HepG2 (cell line): ENCODE measurements at regions of chr17 and their contacts with region 1.

Region 1: GRCh38 chr17:56581635-56582627 is 11.6 kb upstream of the NOG start:
- DNase-seq: no peak
- ATAC-seq: no peak
- H3K4me3 ChIP-seq: no peak overlapping the region
- H3K27ac ChIP-seq: no peak overlapping the region
- H3K4me1 ChIP-seq: no peaks in the 10 kb centered on the region
- H3K27me3 ChIP-seq: peaks cover 0 to 53% of the 10 kb centered on the region in 2 experiments; a peak in 4 of 5 replicates
- CTCF ChIP-seq: no peak
- EP300 ChIP-seq: no peak
- POLR2A ChIP-seq: no peak
- RAD21 ChIP-seq: no peak

Region 2: GRCh38 chr17:56679115-56679766 is 97.3 kb after region 1 on chr17:
- CTCF ChIA-PET with region 1: no interaction called
- POLR2A ChIA-PET with region 1: no interaction called
- in situ Hi-C with region 1: no loop called
- intact Hi-C with region 1: no loop called
- DNase-seq: peak; percentile 15
- ATAC-seq: peak; percentile 87
- H3K4me3 ChIP-seq: no peak overlapping the region
- H3K27ac ChIP-seq: no peak overlapping the region
- H3K4me1 ChIP-seq: 0 out of 2 replicates have a peak, but pooled peaks cover 4% of the 10 kb centered on the region
- H3K27me3 ChIP-seq: peaks cover 5 to 41% of the 10 kb centered on the region in 2 experiments; a peak in 4 of 5 replicates
- CTCF ChIP-seq: peak; percentile 60
- EP300 ChIP-seq: no peak
- POLR2A ChIP-seq: no peak
- RAD21 ChIP-seq: no peak

Region 3: GRCh38 chr17:56715613-56716357 is 133.9 kb after region 1 on chr17:
- CTCF ChIA-PET with region 1: no interaction called
- POLR2A ChIA-PET with region 1: no interaction called
- in situ Hi-C with region 1: loop called (anchors 5 kb)
- intact Hi-C with region 1: no loop called
- DNase-seq: peak; percentile 65
- ATAC-seq: peak; percentile 97
- H3K4me3 ChIP-seq: no peak overlapping the region
- H3K27ac ChIP-seq: no peak overlapping the region
- H3K4me1 ChIP-seq: no peaks in the 10 kb centered on the region
- H3K27me3 ChIP-seq: peaks cover 0 to 37% of the 10 kb centered on the region in 2 experiments; a peak in 4 of 5 replicates
- CTCF ChIP-seq: peak; percentile 91
- EP300 ChIP-seq: no peak
- POLR2A ChIP-seq: no peak
- RAD21 ChIP-seq: peak; percentile 78